ENCODE measurements at regions of chr19 and their contacts with region 1.

Region 1: GRCh38 chr19:39406656-39407393 is at the start of gene ZFP36:
- DNase-seq: peak; percentile 92
- ATAC-seq: peak; percentile 35
- H3K4me3 Mint-ChIP-seq: peak within 1 kb of the TSS; percentile 84
- H3K27ac Mint-ChIP-seq: peak within 1 kb of the TSS; percentile 98
- H3K4me1 Mint-ChIP-seq: peaks cover 56% of the 10 kb centered on the region
- H3K27me3 Mint-ChIP-seq: no peaks in the 10 kb centered on the region
- total RNA-seq, gene ZFP36: 45.1 to 107 TPM

Region 2: GRCh38 chr19:39390755-39391592 is 15.9 kb before region 1 on chr19 and contains the starts of genes MED29 and PAF1:
- CTCF ChIA-PET with region 1: interaction called, 152 read pairs
- DNase-seq: peak; percentile 99
- ATAC-seq: peak; percentile 93
- H3K4me3 Mint-ChIP-seq: peak within 1 kb of the TSS; percentile 97
- H3K27ac Mint-ChIP-seq: peak within 1 kb of the TSS; percentile 99
- H3K4me1 Mint-ChIP-seq: peaks cover 40% of the 10 kb centered on the region
- H3K27me3 Mint-ChIP-seq: no peaks in the 10 kb centered on the region
- total RNA-seq, gene MED29: 31.0 to 31.2 TPM
- total RNA-seq, gene PAF1: 48.9 to 53.8 TPM